ENCODE measurements at regions of chr14 and their contacts with region 1.

Region 1: GRCh38 chr14:47210099-47210498 is 465.3 kb downstream of the MDGA2 start:
- DNase-seq: no peak
- ATAC-seq: no peak
- H3K4me3 ChIP-seq: no peak overlapping the region
- H3K27ac ChIP-seq: no peak overlapping the region
- H3K4me1 ChIP-seq: no peaks in the 10 kb centered on the region
- H3K27me3 ChIP-seq: no peaks in the 10 kb centered on the region
- CTCF ChIP-seq: no peak

Region 2: DNA sequence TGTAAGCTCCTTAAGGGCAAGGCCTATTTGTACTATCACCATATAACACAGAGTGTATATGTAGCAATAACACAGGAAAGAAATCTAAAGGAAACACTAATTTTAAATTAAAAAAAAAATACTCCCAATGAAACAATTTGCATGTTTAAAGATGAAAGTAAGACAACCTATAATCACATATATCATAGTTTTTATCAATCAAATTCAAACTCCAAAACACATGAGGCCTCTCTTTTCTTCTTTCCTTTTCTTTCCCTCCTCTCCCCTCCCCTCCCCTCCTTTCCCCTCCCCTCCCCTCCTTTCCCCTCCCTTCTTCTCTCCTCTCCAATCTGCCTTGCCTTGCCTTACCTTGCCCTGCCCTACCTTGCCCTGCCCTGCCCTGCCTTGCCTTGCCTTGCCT is 152.7 kb before region 1 on chr14:
- intact Hi-C with region 1: no loop called
- DNase-seq: no peak
- ATAC-seq: no peak
- H3K4me3 ChIP-seq: no peak overlapping the region
- H3K27ac ChIP-seq: no peak overlapping the region
- H3K4me1 ChIP-seq: no peaks in the 10 kb centered on the region
- H3K27me3 ChIP-seq: no peaks in the 10 kb centered on the region
- CTCF ChIP-seq: no peak

Region 3: GRCh38 chr14:47226877-47227520 is 16.9 kb after region 1 on chr14:
- intact Hi-C with region 1: loop called (anchors 2 kb)
- DNase-seq: no peak
- ATAC-seq: no peak
- H3K4me3 ChIP-seq: no peak overlapping the region
- H3K27ac ChIP-seq: no peak overlapping the region
- H3K4me1 ChIP-seq: no peaks in the 10 kb centered on the region
- H3K27me3 ChIP-seq: no peaks in the 10 kb centered on the region
- CTCF ChIP-seq: no peak

Region 4: DNA sequence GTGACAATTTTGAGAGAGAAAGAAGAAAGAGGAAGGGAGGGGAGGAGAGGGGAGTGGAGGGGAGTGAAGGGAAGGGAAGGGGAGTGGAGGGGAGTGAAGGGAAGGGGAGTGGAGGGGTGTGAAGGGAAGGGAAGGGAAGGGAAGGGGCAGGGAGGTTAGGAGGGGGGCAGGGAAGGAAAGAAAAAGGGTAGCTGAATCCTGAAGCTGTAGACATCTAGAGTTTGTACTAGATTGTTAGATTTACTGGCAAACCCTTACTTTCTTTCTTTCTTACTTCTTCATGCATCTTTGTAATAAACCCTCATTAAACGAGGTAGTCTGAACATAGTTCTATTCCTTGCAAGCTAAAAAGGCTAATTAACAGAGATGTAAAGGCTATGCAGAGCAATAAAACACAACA is 87.3 kb after region 1 on chr14:
- intact Hi-C with region 1: no loop called
- DNase-seq: no peak
- ATAC-seq: no peak
- H3K4me3 ChIP-seq: no peak overlapping the region
- H3K27ac ChIP-seq: no peak overlapping the region
- H3K4me1 ChIP-seq: no peaks in the 10 kb centered on the region
- H3K27me3 ChIP-seq: no peaks in the 10 kb centered on the region
- CTCF ChIP-seq: no peak

Region 5: DNA sequence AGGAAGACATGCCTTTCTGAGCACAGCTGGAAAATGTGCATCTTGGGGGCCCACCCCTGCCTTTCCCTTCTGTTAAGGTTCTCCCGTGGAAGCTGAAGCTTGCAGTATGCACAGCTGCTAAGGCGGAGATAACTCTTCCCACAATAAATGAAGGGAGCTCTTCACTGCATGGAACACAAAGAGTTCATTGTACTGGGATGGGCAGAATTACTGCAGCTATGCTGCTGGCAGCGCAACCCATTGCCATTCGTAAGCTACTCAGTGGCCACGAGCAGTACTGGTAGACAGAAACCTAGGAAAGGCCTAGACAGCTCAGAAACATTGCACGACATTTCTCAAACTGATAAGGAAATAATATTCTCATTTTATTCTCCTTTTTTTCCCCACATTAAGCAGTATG is 155.1 kb after region 1 on chr14:
- intact Hi-C with region 1: no loop called
- DNase-seq: no peak
- ATAC-seq: no peak
- H3K4me3 ChIP-seq: no peak overlapping the region
- H3K27ac ChIP-seq: no peak overlapping the region
- H3K4me1 ChIP-seq: no peaks in the 10 kb centered on the region
- H3K27me3 ChIP-seq: no peaks in the 10 kb centered on the region
- CTCF ChIP-seq: no peak